ENCODE measurements at regions of chr9 and their contacts with region 1.

Region 1: DNA sequence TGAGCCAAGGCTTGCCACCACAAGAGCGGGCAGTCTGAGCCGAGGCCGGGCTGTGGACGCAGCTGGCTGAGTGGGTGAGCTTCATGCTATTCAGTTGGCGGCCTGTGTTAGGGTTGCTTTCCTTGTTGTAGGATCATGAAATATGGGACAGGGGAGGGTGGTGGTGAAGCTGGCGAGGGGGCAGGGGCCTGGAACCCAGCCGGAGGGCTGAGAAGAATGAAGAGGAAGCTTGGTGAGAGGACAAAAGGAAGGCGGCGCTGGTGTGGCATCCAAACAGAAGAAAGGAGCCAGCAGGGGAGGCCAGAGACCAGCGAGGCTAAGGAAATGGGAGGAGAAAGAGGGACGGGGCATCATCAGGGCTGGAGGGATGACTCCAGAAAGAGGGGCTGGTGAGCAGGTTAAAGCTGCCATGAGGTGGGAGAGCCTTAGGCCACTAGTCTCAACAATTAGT is 18.3 kb downstream of the RALGPS1 start:
- DNase-seq: no peak
- H3K4me3 ChIP-seq: no peak overlapping the region
- CTCF ChIP-seq: no peak

Region 2: DNA sequence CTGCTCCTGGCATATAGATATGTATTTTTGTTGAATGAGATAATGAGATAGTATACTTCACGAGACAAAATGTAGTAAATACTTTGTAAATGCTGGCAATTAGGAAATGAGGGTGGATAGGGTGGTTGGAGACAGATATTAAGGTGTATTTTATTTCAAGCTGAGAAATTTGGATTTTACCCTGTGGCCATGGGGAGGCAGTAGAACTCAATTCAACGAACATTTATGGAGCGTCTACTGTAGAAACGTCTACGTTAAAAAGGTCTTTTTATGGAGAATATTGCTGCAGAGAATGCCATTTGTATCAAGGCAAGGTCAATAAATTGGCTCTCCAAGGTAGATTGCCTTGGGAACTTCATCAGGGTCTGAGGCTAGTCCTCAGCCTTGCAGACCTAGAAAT is 39.8 kb before region 1 on chr9:
- in situ Hi-C with region 1: no loop called
- DNase-seq: no peak
- H3K4me3 ChIP-seq: no peak overlapping the region
- CTCF ChIP-seq: peak; percentile 18

Region 3: DNA sequence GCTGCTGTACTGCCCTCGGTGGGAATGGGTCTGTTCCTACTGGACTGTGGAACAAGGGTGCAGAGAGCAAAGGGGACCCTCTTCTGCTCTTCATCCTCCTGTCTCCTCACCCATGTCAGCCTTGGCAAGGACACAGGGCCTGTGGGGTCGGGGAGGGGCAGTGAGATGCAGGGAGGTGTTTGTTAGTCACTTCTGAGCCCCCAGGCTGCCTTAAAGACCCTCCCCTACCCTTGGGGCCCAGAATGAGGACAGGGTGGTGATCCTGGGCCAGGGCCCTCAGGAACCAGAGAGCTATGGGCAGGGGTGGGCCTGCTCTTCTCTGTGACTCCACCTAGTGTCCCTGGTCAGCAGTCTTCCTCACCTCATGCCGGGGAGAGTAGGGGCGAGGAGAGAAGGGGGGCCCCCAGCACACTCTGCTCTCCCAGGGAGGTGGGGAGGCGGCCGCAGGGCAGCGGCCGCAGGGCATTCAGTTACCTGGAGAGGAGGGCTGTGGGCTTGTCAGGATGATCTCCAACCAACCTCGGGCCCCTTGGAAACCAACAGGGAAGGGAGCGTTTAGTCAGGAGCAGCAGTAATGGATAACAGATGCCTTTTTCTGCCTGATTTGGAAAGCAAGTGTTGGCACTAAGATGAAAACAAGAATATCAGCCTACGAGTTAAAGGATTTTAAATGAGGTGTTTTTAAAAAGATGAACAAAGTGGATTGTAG is 269.7 kb after region 1 on chr9:
- in situ Hi-C with region 1: loop called (anchors 5 kb)
- DNase-seq: no peak
- H3K4me3 ChIP-seq: no peak overlapping the region
- CTCF ChIP-seq: no peak

Measured in astrocyte of the cerebellum (primary cell).